Activated T-helper 2 cell treated with anti-CD3 and anti-CD28 coated beads, Interferon-gamma antibody, Interleukin-2, Interleukin-4, amounts not matched to agents 10 μg/mL and 5 μg/mL and 100 μg/mL, durations not matched to agents 14 hours and 24 hours and 36 hours (primary cell): ENCODE measurements at regions of chr4 and their contacts with region 1.

Region 1: DNA sequence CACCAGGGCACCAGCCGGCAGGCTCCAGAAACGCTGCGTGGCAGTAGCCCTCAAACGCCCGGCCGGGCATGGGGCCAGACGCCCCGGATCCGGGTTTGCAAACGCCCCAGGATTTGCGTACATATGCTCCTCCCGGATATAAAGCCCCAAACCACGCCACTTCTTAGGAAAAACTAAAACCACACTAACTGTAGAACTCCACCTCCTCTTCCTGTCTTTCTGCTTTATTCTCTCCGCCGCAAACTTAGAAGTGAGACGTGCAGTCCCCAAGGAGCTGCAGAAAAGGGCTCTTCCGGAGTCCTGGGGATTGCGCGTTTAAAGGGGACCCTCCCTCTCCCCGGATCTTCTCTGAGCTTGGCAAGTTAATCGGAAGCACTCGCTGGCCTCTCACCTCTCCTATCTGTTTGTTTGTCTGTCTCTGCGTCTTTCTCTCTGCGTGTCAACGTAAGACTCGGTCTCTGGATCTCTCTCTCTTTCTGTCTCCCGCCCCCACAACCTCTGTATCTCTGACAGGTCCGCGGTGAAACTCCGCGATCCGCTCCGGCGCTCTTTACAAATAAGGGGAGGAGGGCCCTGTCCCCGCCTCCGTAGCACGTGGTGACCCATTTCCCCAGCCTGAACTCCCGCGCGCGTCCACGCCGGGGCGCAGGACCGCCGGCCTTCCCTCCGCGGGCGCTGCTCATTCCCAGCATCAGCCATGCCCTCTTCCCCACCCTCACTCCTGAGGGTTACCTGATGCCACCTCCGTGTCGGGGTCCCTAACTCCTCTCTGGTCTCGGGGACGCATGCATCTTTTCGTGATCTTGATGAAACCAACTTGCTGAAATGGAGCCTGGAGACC is at the start of gene SLC39A8:
- DNase-seq: peak; percentile 88
- H3K4me3 Mint-ChIP-seq: peak within 1 kb of the TSS; percentile 83
- H3K27ac Mint-ChIP-seq: peak within 1 kb of the TSS; percentile 96
- H3K4me1 Mint-ChIP-seq: peaks cover 38% of the 10 kb centered on the region
- H3K27me3 Mint-ChIP-seq: peaks cover 3% of the 10 kb centered on the region
- total RNA-seq, gene SLC39A8: 136 TPM in 2 replicates

Region 2: GRCh38 chr4:101347557-101348366 is 997.4 kb before region 1 on chr4:
- intact Hi-C with region 1: loop called (anchors 2 kb)
- DNase-seq: peak; percentile 96
- H3K4me3 Mint-ChIP-seq: peak overlapping the region; percentile 87
- H3K27ac Mint-ChIP-seq: peak overlapping the region; percentile 72
- H3K4me1 Mint-ChIP-seq: peaks cover 31% of the 10 kb centered on the region
- H3K27me3 Mint-ChIP-seq: peaks cover 41% of the 10 kb centered on the region

Region 3: GRCh38 chr4:102263011-102263787 is 82.0 kb before region 1 on chr4:
- intact Hi-C with region 1: loop called (anchors 2 kb)
- DNase-seq: no peak
- H3K4me3 Mint-ChIP-seq: no peak overlapping the region
- H3K27ac Mint-ChIP-seq: no peak overlapping the region
- H3K4me1 Mint-ChIP-seq: peaks cover 23% of the 10 kb centered on the region
- H3K27me3 Mint-ChIP-seq: no peaks in the 10 kb centered on the region

Region 4: GRCh38 chr4:102500696-102501446 is 155.7 kb after region 1 on chr4 and contains the start of gene NFKB1:
- intact Hi-C with region 1: loop called (anchors 2 kb)
- DNase-seq: peak; percentile 74
- H3K4me3 Mint-ChIP-seq: peak within 1 kb of the TSS; percentile 96
- H3K27ac Mint-ChIP-seq: peak within 1 kb of the TSS; percentile 89
- H3K4me1 Mint-ChIP-seq: peaks cover 29% of the 10 kb centered on the region
- H3K27me3 Mint-ChIP-seq: no peaks in the 10 kb centered on the region
- total RNA-seq, gene NFKB1: 199 and 205 TPM in 2 replicates

Region 5: DNA sequence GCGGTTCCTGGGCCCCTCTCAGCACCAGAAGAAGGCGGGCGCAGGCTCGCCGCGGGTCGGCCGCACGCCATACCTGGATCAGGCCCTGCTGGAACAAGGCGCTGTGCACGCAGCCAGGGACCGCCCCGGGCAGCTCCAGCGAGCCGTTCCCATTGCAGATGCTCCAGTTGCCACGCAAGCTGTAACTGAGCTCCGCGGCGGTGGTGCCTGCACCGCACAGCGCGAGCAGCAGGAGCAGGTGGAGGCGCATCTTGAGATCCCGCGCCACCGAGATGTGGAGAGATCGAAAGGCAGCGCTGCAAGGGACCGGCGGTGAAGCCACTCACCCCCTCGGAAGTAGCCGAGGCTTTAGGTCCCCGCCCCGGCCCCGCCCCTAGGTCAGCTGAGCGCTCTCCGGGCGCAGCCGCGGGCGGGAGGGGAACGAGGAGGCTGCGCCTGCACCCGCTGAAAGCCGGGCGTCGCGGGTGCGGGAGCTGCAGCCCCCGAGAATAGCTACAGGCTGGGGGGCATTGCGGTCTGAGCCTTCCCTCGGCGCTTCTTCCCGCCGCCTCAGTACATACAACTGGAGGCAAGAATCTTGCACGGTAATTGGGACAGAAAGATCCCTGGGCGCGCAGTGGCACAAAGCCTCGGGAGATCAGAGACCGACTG is 415.6 kb after region 1 on chr4 and contains the start of gene MANBA:
- intact Hi-C with region 1: loop called (anchors 2 kb)
- DNase-seq: peak; percentile 79
- H3K4me3 Mint-ChIP-seq: peak within 1 kb of the TSS; percentile 95
- H3K27ac Mint-ChIP-seq: peak within 1 kb of the TSS; percentile 84
- H3K4me1 Mint-ChIP-seq: peaks cover 33% of the 10 kb centered on the region
- H3K27me3 Mint-ChIP-seq: peaks cover 19% of the 10 kb centered on the region
- total RNA-seq, gene MANBA: 9.4 and 11.3 TPM in 2 replicates

Region 6: GRCh38 chr4:103019308-103020124 is 674.3 kb after region 1 on chr4 and contains the start of gene SLC9B1:
- intact Hi-C with region 1: loop called (anchors 10 kb)
- DNase-seq: peak; percentile 92
- H3K4me3 Mint-ChIP-seq: peak within 1 kb of the TSS; percentile 87
- H3K27ac Mint-ChIP-seq: peak within 1 kb of the TSS; percentile 94
- H3K4me1 Mint-ChIP-seq: peaks cover 18% of the 10 kb centered on the region
- H3K27me3 Mint-ChIP-seq: no peaks in the 10 kb centered on the region
- total RNA-seq, gene SLC9B1: 0.28 and 0.57 TPM in 2 replicates

Region 7: DNA sequence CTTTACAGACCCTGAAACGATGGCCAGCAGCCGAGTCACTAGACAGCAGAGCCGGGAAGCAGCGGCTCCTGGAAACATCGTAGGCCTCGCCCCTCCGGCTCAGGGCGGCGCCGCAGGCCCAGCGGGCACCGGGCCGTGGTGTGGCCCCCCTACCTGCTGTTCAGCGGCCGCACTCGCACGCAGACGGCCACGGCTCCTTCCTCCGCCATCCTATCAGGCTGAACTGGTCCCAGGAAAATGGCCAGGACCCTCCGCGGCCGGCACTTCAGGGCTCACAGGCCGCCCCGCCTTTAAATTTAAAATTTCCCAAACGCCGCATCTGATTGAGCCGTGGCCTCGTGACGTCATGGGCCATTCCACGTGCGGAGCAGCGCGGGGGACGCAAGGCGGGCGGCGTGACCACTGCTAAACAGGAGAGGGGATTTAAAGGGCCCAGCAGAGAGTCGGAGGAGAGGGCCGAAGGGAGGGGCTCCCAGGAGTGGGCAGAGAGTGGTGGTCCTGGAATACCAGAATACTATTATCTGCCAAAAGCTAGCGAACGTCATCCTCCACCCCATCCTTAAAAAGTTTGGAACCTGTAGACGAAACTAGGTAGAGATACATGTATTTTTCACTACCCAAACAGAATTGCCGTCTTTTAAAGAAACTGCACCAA is 853.1 kb after region 1 on chr4 and contains the start of gene CENPE:
- intact Hi-C with region 1: loop called (anchors 10 kb)
- DNase-seq: peak; percentile 85
- H3K4me3 Mint-ChIP-seq: peak within 1 kb of the TSS; percentile 96
- H3K27ac Mint-ChIP-seq: peak within 1 kb of the TSS; percentile 95
- H3K4me1 Mint-ChIP-seq: peaks cover 23% of the 10 kb centered on the region
- H3K27me3 Mint-ChIP-seq: peaks cover 9% of the 10 kb centered on the region
- total RNA-seq, gene CENPE: 36.0 and 36.5 TPM in 2 replicates